ENCODE measurements at regions of chr6 and their contacts with region 1.

Region 1: GRCh38 chr6:160088069-160088783 is 33.4 kb upstream of the SLC22A1 start:
- DNase-seq: peak; percentile 79 to 91
- ATAC-seq: peak; percentile 88
- H3K4me3 ChIP-seq: no peak overlapping the region
- H3K27ac ChIP-seq: no peak overlapping the region
- H3K4me1 ChIP-seq: no peaks in the 10 kb centered on the region
- H3K27me3 ChIP-seq: no peaks in the 10 kb centered on the region

Region 2: DNA sequence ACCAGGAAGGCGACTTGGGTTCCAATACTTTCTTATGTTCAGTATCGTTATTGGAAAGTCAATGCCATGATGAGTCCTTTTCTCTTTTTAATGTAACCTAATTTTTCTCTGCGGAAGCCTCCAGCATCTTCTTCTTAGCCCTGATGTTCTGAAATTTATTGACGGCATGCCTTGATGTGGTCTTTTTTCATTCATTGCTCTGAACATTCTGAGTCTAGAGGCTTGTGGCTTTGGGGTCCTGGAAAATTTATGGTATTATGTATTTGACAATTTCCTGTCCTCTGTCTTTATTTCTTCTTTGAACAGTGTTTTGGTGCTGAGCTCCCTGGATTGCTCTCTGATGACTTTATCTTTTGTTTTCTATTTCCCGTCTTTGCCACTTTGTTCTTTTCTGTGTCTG is 226.1 kb before region 1 on chr6:
- intact Hi-C with region 1: loop called in 1 of 2 experiments (anchors 10 kb)
- DNase-seq: no peak
- ATAC-seq: no peak
- H3K4me3 ChIP-seq: no peak overlapping the region
- H3K27ac ChIP-seq: no peak overlapping the region
- H3K4me1 ChIP-seq: no peaks in the 10 kb centered on the region
- H3K27me3 ChIP-seq: no peaks in the 10 kb centered on the region

Region 3: GRCh38 chr6:160132776-160133338 is 44.6 kb after region 1 on chr6:
- intact Hi-C with region 1: loop called in 1 of 2 experiments (anchors 5 kb)
- DNase-seq: no peak
- ATAC-seq: no peak
- H3K4me3 ChIP-seq: no peak overlapping the region
- H3K27ac ChIP-seq: peak overlapping the region in 1 of 2 donors; percentile 5
- H3K4me1 ChIP-seq: no peaks in the 10 kb centered on the region
- H3K27me3 ChIP-seq: no peaks in the 10 kb centered on the region

Region 4: GRCh38 chr6:160146454-160147145 is 58.4 kb after region 1 on chr6:
- intact Hi-C with region 1: no loop called
- DNase-seq: no peak
- ATAC-seq: peak; percentile 72
- H3K4me3 ChIP-seq: no peak overlapping the region
- H3K27ac ChIP-seq: peak overlapping the region; percentile 74 to 87
- H3K4me1 ChIP-seq: peaks cover 5 to 14% of the 10 kb centered on the region in 2 donors
- H3K27me3 ChIP-seq: no peaks in the 10 kb centered on the region

Region 5: GRCh38 chr6:160534050-160534696 is 445.9 kb after region 1 on chr6:
- intact Hi-C with region 1: loop called (anchors 10 kb)
- DNase-seq: peak; percentile 52 to 81
- ATAC-seq: peak; percentile 86
- H3K4me3 ChIP-seq: no peak overlapping the region
- H3K27ac ChIP-seq: no peak overlapping the region
- H3K4me1 ChIP-seq: no peaks in the 10 kb centered on the region
- H3K27me3 ChIP-seq: peaks cover 0 to 2% of the 10 kb centered on the region in 2 donors

Measured in aorta (tissue), 5 donors.